Pancreas (tissue), 10 donors: ENCODE measurements at regions of chr19 and their contacts with region 1.

Region 1: GRCh38 chr19:51422053-51422448 is 4.6 kb upstream of the SIGLEC10 start:
- DNase-seq: peak; percentile 67 to 98 (median 84)
- ATAC-seq: peak; percentile 83 to 97 (median 96)
- H3K4me3 ChIP-seq: no peak overlapping the region
- H3K27ac ChIP-seq: no peak overlapping the region
- H3K4me1 ChIP-seq: no peaks in the 10 kb centered on the region
- H3K27me3 ChIP-seq: peaks cover 0 to 4% (median 0%) of the 10 kb centered on the region in 4 donors
- CTCF ChIP-seq: peak; percentile 92 to 100 (median 96)

Region 2: DNA sequence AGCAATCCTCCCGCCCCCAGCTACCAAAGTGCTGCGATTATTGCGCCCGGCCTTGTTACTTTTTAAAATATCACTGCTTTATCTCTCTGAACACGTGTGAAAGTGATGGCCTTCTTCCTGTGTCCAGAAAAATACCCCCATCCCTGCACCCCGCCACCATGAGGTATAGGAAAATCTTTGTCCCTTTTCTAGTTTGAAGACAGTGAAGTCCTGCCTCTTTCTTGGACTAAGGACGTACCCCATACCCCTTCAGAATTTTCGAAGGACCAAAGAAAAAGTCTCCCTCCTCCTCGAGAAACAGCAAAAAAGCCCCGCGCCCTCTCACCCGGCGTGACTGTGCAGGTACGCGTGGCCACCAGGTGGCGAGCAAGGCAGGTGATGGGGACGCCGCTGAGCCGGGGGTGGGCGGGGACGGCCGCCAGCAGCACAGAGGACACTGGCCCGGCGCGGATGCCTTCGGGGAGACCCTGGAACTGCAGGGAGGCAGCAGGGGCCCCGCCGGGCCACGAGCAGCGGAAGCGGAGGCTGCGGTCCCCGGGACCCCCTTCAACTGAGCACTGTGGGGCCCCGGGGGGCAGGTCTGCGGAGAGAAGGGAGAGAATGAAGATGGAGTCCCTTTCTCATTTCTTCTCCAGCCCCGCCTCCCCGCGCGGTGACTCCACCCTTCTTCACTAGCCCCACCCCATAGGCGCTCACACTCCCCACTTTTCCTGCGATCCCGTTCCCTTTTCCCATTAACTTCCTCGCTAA is 83.3 kb before region 1 on chr19:
- intact Hi-C with region 1: loop called in 1 of 3 experiments (anchors 10 kb)
- DNase-seq: peak; percentile 67 to 92 (median 82)
- ATAC-seq: peak; percentile 80 to 91 (median 84)
- H3K4me3 ChIP-seq: peak overlapping the region; percentile 26 to 79 (median 52)
- H3K27ac ChIP-seq: peak overlapping the region in 1 of 4 donors; percentile 15
- H3K4me1 ChIP-seq: peaks cover 0 to 5% (median 5%) of the 10 kb centered on the region in 3 donors
- H3K27me3 ChIP-seq: no peaks in the 10 kb centered on the region
- CTCF ChIP-seq: peak; percentile 66 to 87 (median 78)

Region 3: GRCh38 chr19:51514866-51515481 is 92.9 kb after region 1 on chr19:
- intact Hi-C with region 1: no loop called
- DNase-seq: no peak
- ATAC-seq: peak in 3 of 4 donors; percentile 62 to 78 (median 70)
- H3K4me3 ChIP-seq: no peak overlapping the region
- H3K27ac ChIP-seq: no peak overlapping the region
- H3K4me1 ChIP-seq: no peaks in the 10 kb centered on the region
- H3K27me3 ChIP-seq: no peaks in the 10 kb centered on the region
- CTCF ChIP-seq: peak; percentile 60 to 81 (median 74)